ENCODE measurements at regions of chr16 and their contacts with region 1.

Region 1: DNA sequence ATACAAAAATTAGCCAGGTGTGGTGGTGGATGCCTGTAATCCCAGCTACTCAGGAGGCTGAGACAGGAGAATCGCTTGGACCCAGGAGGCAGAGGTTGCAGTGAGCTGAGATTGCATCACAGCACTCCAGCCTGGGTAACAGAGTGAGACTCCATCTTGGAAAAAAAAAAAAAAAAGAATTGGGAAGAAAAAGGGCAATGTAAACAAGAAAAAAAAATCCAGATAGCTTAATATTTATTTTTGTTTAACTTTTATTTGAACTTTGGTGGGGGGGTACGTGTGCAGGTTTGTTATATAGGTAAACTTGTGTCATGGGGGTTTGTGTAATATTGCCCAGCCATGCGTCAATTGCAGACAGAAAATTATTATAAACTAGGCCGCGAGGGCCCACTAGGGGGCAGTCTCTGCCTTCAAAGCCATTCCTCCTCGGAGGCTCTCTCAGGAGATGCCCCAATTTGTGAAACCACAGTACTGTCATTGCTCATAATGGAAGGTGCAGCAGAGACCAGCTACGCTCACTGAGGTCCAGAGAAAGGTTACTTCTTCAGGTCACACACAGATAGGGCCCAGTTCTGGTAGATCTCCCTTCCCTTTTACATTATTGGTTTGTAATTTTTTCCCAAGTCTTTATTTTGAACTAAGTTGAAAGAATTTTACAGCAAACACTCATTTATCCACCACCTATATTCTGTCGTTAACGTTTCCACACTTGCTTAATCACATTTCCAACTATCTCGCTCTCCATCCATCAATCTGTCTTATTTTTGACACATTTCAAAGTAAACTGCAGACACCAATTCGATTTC is 206.2 kb downstream of the PRKCB start:
- DNase-seq: peak; percentile 83
- ATAC-seq: peak; percentile 37
- H3K4me3 Mint-ChIP-seq: no peak overlapping the region
- H3K27ac Mint-ChIP-seq: no peak overlapping the region
- H3K4me1 Mint-ChIP-seq: peaks cover 21% of the 10 kb centered on the region
- H3K27me3 Mint-ChIP-seq: no peaks in the 10 kb centered on the region
- CTCF ChIP-seq: peak; percentile 79

Region 2: DNA sequence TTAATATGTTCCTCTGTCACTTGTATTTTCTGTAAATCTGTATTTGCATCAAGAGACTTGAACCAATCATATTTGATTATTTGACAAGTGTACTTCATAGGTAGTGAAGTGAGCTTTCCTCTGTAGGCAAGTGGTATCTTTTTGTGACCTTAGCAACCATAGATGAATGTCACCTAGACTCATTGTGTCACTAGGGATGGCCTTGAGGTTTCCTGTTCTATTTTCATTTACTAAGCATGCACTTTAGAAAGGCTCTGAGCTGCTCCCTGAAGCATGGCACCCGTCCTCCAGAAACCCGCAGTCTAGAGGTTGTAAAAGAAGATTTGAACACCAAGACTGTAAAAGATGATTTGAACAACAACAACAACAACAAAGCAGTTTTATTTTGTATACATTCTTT is 54.6 kb before region 1 on chr16:
- CTCF ChIA-PET with region 1: no interaction called
- POLR2A ChIA-PET with region 1: no interaction called
- DNase-seq: no peak
- ATAC-seq: no peak
- H3K4me3 Mint-ChIP-seq: no peak overlapping the region
- H3K27ac Mint-ChIP-seq: no peak overlapping the region
- H3K4me1 Mint-ChIP-seq: peaks cover 6% of the 10 kb centered on the region
- H3K27me3 Mint-ChIP-seq: peaks cover 21% of the 10 kb centered on the region
- CTCF ChIP-seq: no peak

Region 3: DNA sequence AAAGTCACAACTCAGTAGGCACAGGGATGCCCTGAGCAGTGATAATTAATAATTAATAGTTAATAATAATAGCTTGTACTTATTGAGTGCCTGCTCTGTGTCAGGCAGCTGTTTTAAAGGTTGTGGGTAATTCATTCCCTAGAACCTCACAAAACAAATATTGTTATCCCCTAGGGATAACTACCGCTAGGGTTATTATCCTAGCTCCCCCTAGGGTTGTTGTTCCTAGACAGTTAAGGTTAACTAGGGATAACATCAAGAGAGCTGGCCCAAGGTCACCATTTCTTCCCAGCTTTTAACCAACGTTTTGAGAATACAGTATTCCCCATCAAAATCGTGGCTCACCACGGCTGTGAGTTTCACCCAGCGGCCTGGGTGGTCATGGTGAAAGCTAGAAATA is 26.1 kb before region 1 on chr16:
- CTCF ChIA-PET with region 1: interaction called, 23 read pairs
- POLR2A ChIA-PET with region 1: no interaction called
- DNase-seq: no peak
- ATAC-seq: no peak
- H3K4me3 Mint-ChIP-seq: no peak overlapping the region
- H3K27ac Mint-ChIP-seq: no peak overlapping the region
- H3K4me1 Mint-ChIP-seq: 0 out of 2 replicates have a peak, but pooled peaks cover 3% of the 10 kb centered on the region
- H3K27me3 Mint-ChIP-seq: no peaks in the 10 kb centered on the region; the same call in 1 of the 2 replicates
- CTCF ChIP-seq: no peak

Region 4: GRCh38 chr16:24139282-24139681 is 97.3 kb after region 1 on chr16:
- CTCF ChIA-PET with region 1: interaction called, 13 read pairs
- POLR2A ChIA-PET with region 1: interaction called, 6 read pairs
- DNase-seq: no peak
- ATAC-seq: peak; percentile 84
- H3K4me3 Mint-ChIP-seq: peak overlapping the region; percentile 26
- H3K27ac Mint-ChIP-seq: peak overlapping the region; percentile 100
- H3K4me1 Mint-ChIP-seq: peaks cover 64% of the 10 kb centered on the region
- H3K27me3 Mint-ChIP-seq: peaks cover 3% of the 10 kb centered on the region; the same call in 1 of the 2 replicates
- CTCF ChIP-seq: no peak

Region 5: DNA sequence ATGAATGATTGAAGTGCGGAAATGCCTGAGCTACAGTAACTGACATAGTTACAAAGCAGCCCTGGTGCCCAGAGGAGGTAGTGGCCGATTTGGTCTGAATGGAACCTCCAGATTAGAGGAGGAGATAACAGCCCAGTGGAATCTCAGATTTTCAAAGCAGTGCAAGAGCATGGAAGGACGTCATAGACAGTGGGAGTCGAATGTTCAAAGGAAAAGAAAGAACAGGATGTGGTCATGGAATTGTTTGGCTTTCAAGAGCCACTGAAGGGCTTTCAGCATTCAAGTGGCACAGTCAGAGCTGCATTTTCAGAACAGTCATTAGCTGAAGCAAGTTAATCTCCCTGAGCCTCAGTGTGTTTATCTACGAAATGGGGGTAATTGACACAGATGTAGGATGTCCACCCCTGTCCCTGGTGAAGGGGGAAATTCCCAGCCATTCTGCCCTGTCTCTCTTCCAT is 109.5 kb after region 1 on chr16:
- CTCF ChIA-PET with region 1: no interaction called
- POLR2A ChIA-PET with region 1: no interaction called
- DNase-seq: no peak
- ATAC-seq: peak; percentile 84
- H3K4me3 Mint-ChIP-seq: no peak overlapping the region
- H3K27ac Mint-ChIP-seq: peak overlapping the region; percentile 43; the same call in 1 of the 2 replicates
- H3K4me1 Mint-ChIP-seq: peaks cover 20% of the 10 kb centered on the region
- H3K27me3 Mint-ChIP-seq: no peaks in the 10 kb centered on the region
- CTCF ChIP-seq: no peak

Region 6: GRCh38 chr16:24309222-24309905 is 267.3 kb after region 1 on chr16:
- CTCF ChIA-PET with region 1: interaction called, 17 read pairs
- POLR2A ChIA-PET with region 1: no interaction called
- DNase-seq: no peak
- ATAC-seq: no peak
- H3K4me3 Mint-ChIP-seq: no peak overlapping the region
- H3K27ac Mint-ChIP-seq: no peak overlapping the region
- H3K4me1 Mint-ChIP-seq: peaks cover 5% of the 10 kb centered on the region; the same call in 1 of the 2 replicates
- H3K27me3 Mint-ChIP-seq: no peaks in the 10 kb centered on the region
- CTCF ChIP-seq: no peak

Region 7: DNA sequence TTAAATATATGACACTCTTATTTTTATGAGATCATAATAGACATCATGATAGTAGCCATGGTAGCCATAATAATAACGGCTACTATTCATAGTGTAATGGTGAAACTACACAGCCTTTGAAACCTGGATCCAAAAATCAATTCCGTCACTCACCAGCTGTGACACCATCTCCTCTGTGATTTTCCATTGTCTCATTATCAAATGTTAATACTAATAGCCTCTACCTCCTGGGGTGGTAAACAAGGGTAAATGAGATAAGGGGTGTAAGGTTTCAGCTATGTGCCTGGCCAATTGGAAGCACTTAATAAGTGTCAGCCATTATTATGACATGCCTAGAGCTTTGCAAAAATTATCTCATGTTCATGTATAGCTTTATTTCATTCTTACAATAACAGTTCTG is 302.8 kb after region 1 on chr16:
- CTCF ChIA-PET with region 1: interaction called, 11 read pairs
- POLR2A ChIA-PET with region 1: no interaction called
- DNase-seq: no peak
- ATAC-seq: no peak
- H3K4me3 Mint-ChIP-seq: no peak overlapping the region
- H3K27ac Mint-ChIP-seq: no peak overlapping the region; the same call in 1 of the 2 replicates
- H3K4me1 Mint-ChIP-seq: peaks cover 50% of the 10 kb centered on the region
- H3K27me3 Mint-ChIP-seq: no peaks in the 10 kb centered on the region
- CTCF ChIP-seq: no peak

Region 8: DNA sequence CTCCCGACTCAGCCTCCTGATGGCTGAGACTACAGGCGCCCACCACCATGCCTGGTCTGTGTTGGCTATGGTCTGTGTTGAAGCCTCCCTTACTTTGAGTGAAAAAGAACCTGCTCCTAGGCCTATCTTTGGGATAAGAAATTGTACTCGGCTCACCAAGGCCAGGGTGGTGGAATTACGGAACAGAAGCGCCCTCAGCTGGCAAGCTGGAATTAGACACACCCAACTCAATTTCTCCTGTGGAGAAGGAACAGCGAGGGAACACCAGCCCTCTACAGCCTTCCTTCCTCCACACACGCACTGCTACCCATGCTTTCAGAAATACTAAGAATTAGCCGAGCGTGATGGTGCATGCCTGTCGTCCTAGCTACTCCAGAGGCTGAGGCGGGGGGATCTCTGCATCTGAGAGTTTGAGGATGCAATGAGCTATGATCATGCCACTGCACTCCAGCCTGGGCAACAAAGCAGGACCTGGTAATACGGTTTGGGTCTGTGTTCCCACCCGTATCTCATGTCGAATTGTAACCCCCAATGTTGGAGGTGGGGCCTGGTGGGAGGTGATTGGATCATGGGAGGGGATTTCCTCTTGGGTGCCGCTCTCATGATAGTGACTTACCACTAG is 457.3 kb after region 1 on chr16:
- CTCF ChIA-PET with region 1: interaction called, 136 read pairs
- POLR2A ChIA-PET with region 1: interaction called, 3 read pairs
- DNase-seq: peak; percentile 75
- ATAC-seq: peak; percentile 92
- H3K4me3 Mint-ChIP-seq: no peak overlapping the region
- H3K27ac Mint-ChIP-seq: no peak overlapping the region
- H3K4me1 Mint-ChIP-seq: peaks cover 7% of the 10 kb centered on the region
- H3K27me3 Mint-ChIP-seq: no peaks in the 10 kb centered on the region; the same call in 1 of the 2 replicates
- CTCF ChIP-seq: peak; percentile 44